ENCODE measurements at regions of chr16 and their contacts with region 1.

Region 1: DNA sequence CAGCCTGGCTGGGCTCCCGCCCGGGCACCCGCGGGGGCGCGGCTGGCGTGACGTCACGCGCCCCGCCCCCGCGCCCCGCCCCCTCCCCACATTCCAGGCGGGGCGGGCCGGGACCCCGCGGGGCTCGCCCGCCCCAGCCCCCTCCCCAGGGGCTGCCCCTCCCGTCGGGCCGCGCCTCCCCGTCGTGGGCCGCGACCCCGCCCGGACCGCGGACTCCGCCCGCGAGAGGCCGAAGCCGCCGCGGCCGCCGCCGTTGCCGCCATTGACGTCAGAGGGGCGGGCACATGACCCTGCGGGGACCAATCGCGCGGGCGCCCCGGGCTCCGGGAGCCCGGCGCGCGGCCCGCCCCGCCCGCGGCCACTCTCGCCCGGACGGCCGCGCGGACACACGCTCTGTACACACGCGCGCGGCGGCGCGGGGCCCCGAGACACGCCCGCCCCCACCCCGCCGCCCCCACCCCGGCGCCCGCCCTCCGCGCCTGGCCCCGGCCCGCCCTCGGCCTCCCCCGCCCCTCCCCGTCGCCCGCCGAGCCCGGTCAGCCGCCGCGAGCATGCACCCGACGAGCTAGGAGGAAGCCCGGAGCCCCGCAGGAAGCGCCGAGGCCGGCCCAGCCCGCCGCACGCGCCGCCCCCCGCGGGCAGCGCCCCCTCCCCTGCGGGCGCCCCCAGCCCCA is at the start of gene CMIP:
- DNase-seq: peak; percentile 92
- H3K4me3 Mint-ChIP-seq: peak within 1 kb of the TSS; percentile 100
- H3K27ac Mint-ChIP-seq: peak within 1 kb of the TSS; percentile 99
- H3K4me1 Mint-ChIP-seq: peaks cover 56% of the 10 kb centered on the region
- H3K27me3 Mint-ChIP-seq: no peaks in the 10 kb centered on the region
- CTCF ChIP-seq: no peak
- total RNA-seq, gene CMIP: 79.9 and 82.7 TPM in 2 replicates

Region 2: DNA sequence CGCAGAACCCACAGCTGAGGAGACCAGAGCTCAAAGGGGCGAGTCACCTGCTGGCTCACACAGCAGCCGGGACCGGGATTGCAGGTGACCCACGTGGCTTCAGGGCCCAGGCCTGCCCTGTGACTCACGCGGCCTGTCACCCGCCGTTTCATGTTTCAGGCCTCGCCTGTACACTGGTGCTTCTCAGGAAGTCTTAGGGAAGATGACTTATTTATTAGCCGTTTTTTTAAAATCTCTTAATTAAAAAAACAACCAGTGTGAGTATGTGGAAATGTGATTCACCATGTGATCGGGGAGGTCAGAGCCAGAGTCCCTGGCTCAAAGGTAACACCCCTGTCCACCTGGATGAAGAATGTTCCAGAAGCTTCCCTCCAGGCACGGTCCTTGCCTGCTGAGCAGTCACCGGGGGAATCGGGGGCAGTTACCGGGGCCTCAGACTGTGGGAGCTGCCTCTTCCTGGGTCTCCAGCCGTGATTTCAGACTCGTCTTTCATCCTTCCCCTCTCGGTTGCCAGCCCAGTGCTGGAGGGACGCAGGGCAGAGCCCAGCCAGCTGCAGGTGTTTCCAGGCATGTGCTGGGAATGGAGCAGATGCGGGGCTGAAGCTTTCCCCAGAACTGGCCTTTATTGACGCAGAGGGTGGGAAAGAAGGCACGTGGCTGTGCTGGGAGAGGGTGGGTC is 49.3 kb after region 1 on chr16:
- CTCF ChIA-PET with region 1: no interaction called
- intact Hi-C with region 1: loop called (anchors 5 kb)
- DNase-seq: peak; percentile 93
- H3K4me3 Mint-ChIP-seq: peak overlapping the region; percentile 22
- H3K27ac Mint-ChIP-seq: peak overlapping the region; percentile 74
- H3K4me1 Mint-ChIP-seq: peaks cover 43% of the 10 kb centered on the region
- H3K27me3 Mint-ChIP-seq: no peaks in the 10 kb centered on the region
- CTCF ChIP-seq: no peak

Region 3: GRCh38 chr16:81505011-81505661 is 60.6 kb after region 1 on chr16:
- CTCF ChIA-PET with region 1: no interaction called
- intact Hi-C with region 1: no loop called
- DNase-seq: no peak
- H3K4me3 Mint-ChIP-seq: no peak overlapping the region
- H3K27ac Mint-ChIP-seq: no peak overlapping the region
- H3K4me1 Mint-ChIP-seq: peaks cover 39% of the 10 kb centered on the region
- H3K27me3 Mint-ChIP-seq: no peaks in the 10 kb centered on the region
- CTCF ChIP-seq: no peak

Region 4: DNA sequence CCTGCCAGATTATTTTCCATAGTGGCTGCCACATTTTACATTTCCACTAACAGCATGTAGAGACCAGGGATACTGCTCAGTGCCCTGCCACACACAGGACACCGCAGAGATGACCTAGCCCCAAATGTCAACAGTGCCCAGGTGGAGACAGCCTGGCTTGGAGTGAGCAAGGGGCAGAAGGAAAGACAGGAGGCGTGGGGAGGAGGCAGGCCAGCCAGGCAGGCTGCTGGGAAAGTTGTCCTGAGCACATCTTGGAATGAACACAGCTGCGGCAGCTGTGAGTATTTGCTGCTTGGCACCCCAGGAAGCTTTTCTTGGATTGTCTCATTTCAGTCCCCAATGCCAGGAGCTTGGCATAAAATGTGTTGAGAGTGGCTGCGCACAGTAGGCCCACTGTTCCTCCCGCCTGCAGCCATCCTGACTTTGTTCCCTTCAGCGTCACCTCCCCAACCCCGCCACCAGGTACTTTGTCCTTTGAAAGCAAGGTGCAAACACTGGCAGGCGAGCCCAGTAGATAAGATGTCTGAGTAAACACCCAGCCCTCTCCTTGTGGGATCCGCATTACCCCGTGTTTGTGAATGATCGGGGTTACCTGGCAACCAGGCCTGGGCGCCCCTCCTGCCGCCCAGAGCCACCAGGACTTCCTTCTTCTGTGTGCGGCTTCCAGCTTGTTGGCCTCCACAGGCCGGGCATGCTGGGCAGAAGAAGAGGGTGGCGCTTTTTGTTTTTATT is 114.0 kb after region 1 on chr16:
- CTCF ChIA-PET with region 1: no interaction called
- intact Hi-C with region 1: loop called (anchors 5 kb)
- DNase-seq: peak; percentile 92
- H3K4me3 Mint-ChIP-seq: peak overlapping the region; percentile 32
- H3K27ac Mint-ChIP-seq: peak overlapping the region; percentile 71
- H3K4me1 Mint-ChIP-seq: peaks cover 69% of the 10 kb centered on the region
- H3K27me3 Mint-ChIP-seq: no peaks in the 10 kb centered on the region
- CTCF ChIP-seq: no peak